ENCODE measurements at regions of chrX and their contacts with region 1.

Region 1: GRCh38 chrX:23554304-23554703 is 113.0 kb upstream of the PRDX4 start:
- DNase-seq: no peak
- H3K4me3 ChIP-seq: no peak overlapping the region
- H3K27ac ChIP-seq: no peak overlapping the region
- H3K4me1 ChIP-seq: no peaks in the 10 kb centered on the region
- H3K27me3 ChIP-seq: no peaks in the 10 kb centered on the region
- CTCF ChIP-seq: peak; percentile 36 to 47 (median 43)
- EP300 ChIP-seq: no peak
- POLR2A ChIP-seq: no peak

Region 2: DNA sequence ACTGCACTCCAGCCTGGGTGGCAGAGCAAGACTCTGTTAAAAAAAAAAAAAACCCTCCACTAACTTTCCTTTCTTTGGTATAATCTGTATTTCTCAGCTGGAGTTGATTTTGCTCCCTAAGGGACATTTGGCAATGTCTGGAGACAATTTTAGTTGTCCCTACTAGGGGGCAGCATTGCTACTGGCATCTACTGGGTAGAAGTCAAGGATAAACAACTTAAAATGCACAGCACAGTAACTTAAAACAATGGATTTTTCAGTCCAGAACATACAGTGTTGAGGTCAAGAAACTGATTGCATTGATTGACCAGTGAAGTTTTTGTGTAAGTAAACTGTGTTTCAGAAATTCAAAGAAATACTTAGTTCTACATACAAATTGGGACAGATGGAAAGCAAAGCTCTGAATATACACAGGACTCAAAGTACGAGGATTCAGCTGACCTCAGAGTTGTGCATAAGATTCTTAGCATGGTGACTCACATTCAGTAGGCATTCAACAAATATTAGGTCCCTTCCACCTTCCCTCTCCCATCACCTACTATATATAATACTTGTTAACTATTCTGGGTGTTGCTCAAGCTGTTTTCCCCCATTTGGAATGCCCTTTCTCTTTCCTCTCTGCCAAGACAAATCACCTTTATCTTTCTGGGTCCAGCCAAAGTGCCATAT is 545.7 kb before region 1 on chrX:
- intact Hi-C with region 1: loop called (anchors 10 kb)
- DNase-seq: no peak
- H3K4me3 ChIP-seq: no peak overlapping the region
- H3K27ac ChIP-seq: no peak overlapping the region
- H3K4me1 ChIP-seq: no peaks in the 10 kb centered on the region
- H3K27me3 ChIP-seq: no peaks in the 10 kb centered on the region
- CTCF ChIP-seq: peak; percentile 5 to 40 (median 20)
- EP300 ChIP-seq: no peak
- POLR2A ChIP-seq: no peak

Region 3: GRCh38 chrX:23598561-23598960 is 44.3 kb after region 1 on chrX:
- intact Hi-C with region 1: no loop called
- DNase-seq: no peak
- H3K4me3 ChIP-seq: no peak overlapping the region
- H3K27ac ChIP-seq: no peak overlapping the region
- H3K4me1 ChIP-seq: no peaks in the 10 kb centered on the region
- H3K27me3 ChIP-seq: no peaks in the 10 kb centered on the region
- CTCF ChIP-seq: no peak
- EP300 ChIP-seq: no peak
- POLR2A ChIP-seq: no peak